K562 (cell line): ENCODE measurements at regions of chr10 and their contacts with region 1.

Region 1: GRCh38 chr10:119596537-119597404 is at the start of gene TIAL1:
- DNase-seq: peak; percentile 75 to 97 (median 82)
- ATAC-seq: peak; percentile 91
- H3K4me3 ChIP-seq: peak within 1 kb of the TSS; percentile 96
- H3K27ac ChIP-seq: peak within 1 kb of the TSS; percentile 99
- H3K4me1 ChIP-seq: peaks cover 3 to 8% of the 10 kb centered on the region in 2 experiments; a peak in 4 of 5 replicates
- H3K27me3 ChIP-seq: no peaks in the 10 kb centered on the region
- CTCF ChIP-seq: no peak
- EP300 ChIP-seq: no peak
- POLR2A ChIP-seq: peak; percentile 92
- RAD21 ChIP-seq: no peak
- polyA plus RNA-seq, gene TIAL1: 22.5 to 30.8 TPM

Region 2: GRCh38 chr10:119445311-119445934 is 151.3 kb before region 1 on chr10:
- CTCF ChIA-PET with region 1: no interaction called
- POLR2A ChIA-PET with region 1: no interaction called
- in situ Hi-C with region 1: no loop called
- intact Hi-C with region 1: loop called (anchors 5 kb)
- DNase-seq: peak; percentile 76 to 83 (median 82)
- ATAC-seq: peak; percentile 92
- H3K4me3 ChIP-seq: no peak overlapping the region
- H3K27ac ChIP-seq: no peak overlapping the region
- H3K4me1 ChIP-seq: peaks cover 0 to 17% of the 10 kb centered on the region in 2 experiments; a peak in 2 of 5 replicates
- H3K27me3 ChIP-seq: peaks cover 0 to 59% of the 10 kb centered on the region in 2 experiments; a peak in 3 of 5 replicates
- CTCF ChIP-seq: peak; percentile 78 to 81 (median 78)
- EP300 ChIP-seq: no peak
- POLR2A ChIP-seq: no peak
- RAD21 ChIP-seq: peak; percentile 65 to 74

Region 3: DNA sequence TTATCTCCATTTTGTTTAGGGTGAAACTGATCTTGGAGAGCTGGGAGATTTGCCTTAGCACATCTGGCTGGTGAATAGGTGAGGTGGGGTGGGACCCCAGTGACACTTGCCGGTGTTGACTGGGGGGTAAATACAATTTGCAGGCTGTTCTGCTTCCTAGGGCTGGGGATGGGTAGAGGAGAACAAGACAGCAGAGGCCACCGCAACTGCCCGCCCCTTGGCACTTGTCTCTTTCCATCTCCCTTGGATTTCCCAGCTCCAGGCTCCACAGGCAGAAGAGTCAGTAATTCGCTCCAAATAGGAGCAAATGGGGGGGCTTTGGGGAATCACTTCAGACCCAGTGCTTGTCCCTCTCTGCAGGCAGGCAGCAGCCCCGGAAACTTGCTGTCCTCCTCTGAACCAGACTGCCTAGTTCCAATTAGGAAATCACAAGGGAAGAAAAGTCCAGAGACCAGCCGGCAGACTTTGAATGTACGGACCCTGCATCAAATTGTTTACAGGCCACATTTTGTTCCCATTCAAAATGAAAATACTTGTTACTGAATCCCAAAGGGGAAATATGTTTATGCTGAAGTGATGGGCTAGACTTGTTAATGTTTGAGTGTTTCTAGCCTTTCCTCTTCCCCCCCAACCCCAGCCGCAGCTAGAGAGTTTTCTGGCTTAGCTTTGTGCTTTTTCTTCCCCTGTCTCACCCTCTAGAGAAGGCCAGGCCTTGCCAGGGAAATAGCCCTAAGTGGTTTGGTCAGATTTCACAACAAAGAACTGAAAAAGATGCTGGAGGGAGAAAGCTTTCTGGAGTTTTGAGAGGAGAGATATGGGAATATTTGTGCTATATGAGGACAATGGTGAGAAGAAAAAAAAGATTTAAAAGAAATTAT is 119.1 kb after region 1 on chr10:
- CTCF ChIA-PET with region 1: no interaction called
- POLR2A ChIA-PET with region 1: no interaction called
- in situ Hi-C with region 1: no loop called
- intact Hi-C with region 1: no loop called
- DNase-seq: no peak
- ATAC-seq: no peak
- H3K4me3 ChIP-seq: no peak overlapping the region
- H3K27ac ChIP-seq: no peak overlapping the region
- H3K4me1 ChIP-seq: no peaks in the 10 kb centered on the region
- H3K27me3 ChIP-seq: no peaks in the 10 kb centered on the region
- CTCF ChIP-seq: no peak
- EP300 ChIP-seq: no peak
- POLR2A ChIP-seq: no peak
- RAD21 ChIP-seq: no peak

Region 4: DNA sequence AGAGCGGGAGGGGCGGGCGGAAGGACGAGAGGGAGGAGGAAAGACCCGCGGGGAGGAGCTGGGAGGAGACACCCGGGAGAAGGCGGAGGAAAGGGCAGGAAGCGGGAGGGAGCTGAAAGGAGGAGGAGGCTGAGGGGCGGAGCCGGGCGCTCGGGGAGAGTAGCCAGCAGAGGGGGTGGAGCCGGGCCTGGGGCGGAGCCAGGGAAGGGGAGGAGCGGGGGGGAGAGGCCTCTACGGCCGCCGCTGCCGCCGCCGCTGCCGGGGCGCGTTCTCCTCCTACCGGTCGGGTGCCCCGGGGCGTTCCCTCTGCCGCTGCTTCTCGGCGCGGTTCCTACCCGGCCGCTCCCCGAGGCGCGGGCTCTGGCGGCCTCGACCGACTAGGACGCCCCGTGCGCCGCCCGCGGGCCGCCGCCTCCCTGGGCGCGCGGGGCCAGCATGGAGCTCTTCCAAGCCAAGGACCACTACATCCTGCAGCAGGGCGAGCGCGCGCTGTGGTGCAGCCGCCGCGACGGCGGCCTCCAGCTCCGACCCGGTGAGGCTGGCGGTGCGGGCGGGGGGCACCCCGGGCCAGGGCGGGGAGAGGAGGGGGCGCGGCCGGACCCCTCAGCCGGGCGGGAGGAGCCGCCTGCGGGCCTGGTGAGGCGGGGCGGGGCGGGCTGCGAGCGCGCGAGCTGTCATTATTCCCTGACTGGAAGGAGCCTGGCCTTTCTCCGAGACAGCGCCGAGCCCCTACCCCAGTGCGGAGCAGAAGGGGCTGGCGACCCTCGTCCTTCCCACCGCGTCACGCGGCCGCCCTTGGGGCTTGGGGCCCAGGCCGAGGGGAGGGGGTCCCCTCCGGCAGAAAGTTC is 129.3 kb after region 1 on chr10 and contains the start of gene INPP5F:
- CTCF ChIA-PET with region 1: no interaction called
- POLR2A ChIA-PET with region 1: no interaction called
- in situ Hi-C with region 1: no loop called
- intact Hi-C with region 1: loop called (anchors 5 kb)
- DNase-seq: peak; percentile 96 to 99 (median 97)
- ATAC-seq: peak; percentile 95
- H3K4me3 ChIP-seq: peak within 1 kb of the TSS; percentile 86
- H3K27ac ChIP-seq: peak within 1 kb of the TSS; percentile 96
- H3K4me1 ChIP-seq: peaks cover 13 to 18% of the 10 kb centered on the region in 2 experiments
- H3K27me3 ChIP-seq: no peaks in the 10 kb centered on the region
- CTCF ChIP-seq: peak in 2 of 3 experiments; percentile 33 to 39; a peak in 3 of 6 replicates
- EP300 ChIP-seq: no peak
- POLR2A ChIP-seq: no peak
- RAD21 ChIP-seq: peak; percentile 13 to 19; a peak in 1 of 4 replicates
- polyA plus RNA-seq, gene INPP5F: 1.6 to 1.7 TPM

Region 5: DNA sequence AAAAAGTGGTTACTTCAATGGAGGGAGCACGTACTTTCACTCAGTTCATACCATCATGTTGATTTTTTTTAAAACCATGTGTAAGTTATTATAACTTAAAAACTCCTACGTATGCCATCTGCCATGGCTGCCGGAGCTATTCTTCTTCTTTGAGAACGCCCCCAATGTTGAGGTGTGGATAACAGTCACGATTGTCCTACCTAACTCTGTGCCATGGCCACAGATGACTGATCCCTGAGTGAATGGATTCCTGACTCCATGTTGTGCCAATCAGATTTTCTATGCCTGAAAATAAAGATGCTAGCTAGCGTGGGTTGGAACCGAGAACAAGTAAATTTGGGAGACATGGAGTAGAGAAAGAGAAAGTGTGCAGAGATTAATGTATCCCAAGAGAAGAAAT is 270.5 kb after region 1 on chr10:
- CTCF ChIA-PET with region 1: no interaction called
- POLR2A ChIA-PET with region 1: no interaction called
- in situ Hi-C with region 1: loop called (anchors 10 kb)
- intact Hi-C with region 1: loop called (anchors 5 kb)
- DNase-seq: no peak
- ATAC-seq: no peak
- H3K4me3 ChIP-seq: no peak overlapping the region
- H3K27ac ChIP-seq: no peak overlapping the region
- H3K4me1 ChIP-seq: peaks cover 5 to 6% of the 10 kb centered on the region in 2 experiments; a peak in 4 of 5 replicates
- H3K27me3 ChIP-seq: no peaks in the 10 kb centered on the region
- CTCF ChIP-seq: no peak
- EP300 ChIP-seq: no peak
- POLR2A ChIP-seq: no peak
- RAD21 ChIP-seq: no peak